T-cell (primary cell): ENCODE measurements at regions of chr6 and their contacts with region 1.

Region 1: GRCh38 chr6:148760568-148761526 is 14.0 kb downstream of the UST start:
- DNase-seq: peak in 32 of 35 experiments; percentile 24 to 75 (median 44)
- ATAC-seq: peak; percentile 64 to 71 (median 68)
- H3K4me3 ChIP-seq: peak overlapping the region; percentile 1 to 42
- H3K4me3 Mint-ChIP-seq: peak overlapping the region; percentile 74 to 83 (median 79)
- H3K27ac ChIP-seq: peak overlapping the region; percentile 95
- H3K27ac Mint-ChIP-seq: peak overlapping the region; percentile 91 to 94
- H3K4me1 ChIP-seq: peaks cover 24 to 34% of the 10 kb centered on the region in 2 experiments
- H3K4me1 Mint-ChIP-seq: peaks cover 51 to 83% (median 53%) of the 10 kb centered on the region in 3 donors
- H3K27me3 ChIP-seq: no peaks in the 10 kb centered on the region
- H3K27me3 Mint-ChIP-seq: no peaks in the 10 kb centered on the region

Region 2: DNA sequence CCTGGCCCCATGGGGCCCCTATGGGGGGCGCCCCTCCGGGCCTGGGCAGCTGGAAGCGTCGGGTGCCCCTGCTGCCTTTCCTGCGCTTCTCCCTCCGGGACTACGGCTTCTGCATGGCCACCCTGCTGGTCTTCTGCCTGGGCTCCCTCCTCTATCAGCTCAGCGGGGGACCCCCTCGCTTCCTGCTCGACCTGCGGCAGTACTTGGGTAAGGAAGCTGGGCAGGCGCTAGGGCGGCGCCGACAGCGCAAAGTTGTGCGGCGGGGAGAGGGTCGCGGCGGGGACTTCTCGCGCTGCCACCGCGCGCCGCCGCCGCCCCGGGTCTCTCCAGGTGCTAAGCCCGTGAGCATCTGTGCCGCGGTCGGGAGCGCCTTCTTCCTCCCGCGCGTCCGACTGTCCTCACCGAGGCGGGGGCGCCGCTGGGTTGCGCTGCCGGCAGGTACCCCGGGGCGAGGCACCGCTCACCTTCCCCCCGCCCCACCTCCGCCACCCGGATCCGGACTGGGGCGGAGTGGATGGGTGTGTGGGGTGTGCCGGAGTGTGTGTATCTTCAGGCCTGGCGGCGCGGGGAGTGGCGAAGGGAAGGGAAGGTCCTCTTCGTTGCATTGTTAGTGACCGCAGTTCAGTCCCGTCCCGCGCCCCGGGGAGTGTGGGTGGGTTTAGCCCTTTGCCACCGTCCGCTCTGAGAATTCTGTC is 13.2 kb before region 1 on chr6:
- CTCF ChIA-PET with region 1: interaction called in 1 of 2 experiments, 7 read pairs
- POLR2A ChIA-PET with region 1: interaction called, 3 to 12 read pairs
- DNase-seq: peak in 33 of 35 experiments; percentile 26 to 75 (median 50)
- ATAC-seq: peak; percentile 73 to 77 (median 75)
- H3K4me3 ChIP-seq: peak overlapping the region; percentile 83 to 88
- H3K4me3 Mint-ChIP-seq: peak overlapping the region; percentile 80 to 94 (median 80)
- H3K27ac ChIP-seq: peak overlapping the region; percentile 58
- H3K27ac Mint-ChIP-seq: no peak overlapping the region
- H3K4me1 ChIP-seq: peaks cover 0 to 18% of the 10 kb centered on the region in 2 experiments
- H3K4me1 Mint-ChIP-seq: peaks cover 21 to 37% (median 30%) of the 10 kb centered on the region in 3 donors
- H3K27me3 ChIP-seq: peaks cover 0 to 20% of the 10 kb centered on the region in 2 experiments
- H3K27me3 Mint-ChIP-seq: peaks cover 24 to 30% of the 10 kb centered on the region in 2 donors

Region 3: GRCh38 chr6:148800535-148800934 is 39.7 kb after region 1 on chr6:
- CTCF ChIA-PET with region 1: no interaction called
- POLR2A ChIA-PET with region 1: interaction called in 1 of 2 experiments, 11 read pairs
- DNase-seq: no peak
- ATAC-seq: no peak
- H3K4me3 ChIP-seq: no peak overlapping the region
- H3K4me3 Mint-ChIP-seq: no peak overlapping the region
- H3K27ac ChIP-seq: no peak overlapping the region
- H3K27ac Mint-ChIP-seq: no peak overlapping the region
- H3K4me1 ChIP-seq: peaks cover 0 to 8% of the 10 kb centered on the region in 2 experiments
- H3K4me1 Mint-ChIP-seq: peaks cover 0 to 20% (median 4%) of the 10 kb centered on the region in 3 donors
- H3K27me3 ChIP-seq: no peaks in the 10 kb centered on the region
- H3K27me3 Mint-ChIP-seq: peaks cover 0 to 1% of the 10 kb centered on the region in 2 donors

Region 4: GRCh38 chr6:149545754-149546528 is 785.1 kb after region 1 on chr6 and contains the start of gene PPIL4:
- CTCF ChIA-PET with region 1: no interaction called
- POLR2A ChIA-PET with region 1: interaction called in 1 of 2 experiments, 13 read pairs
- DNase-seq: peak; percentile 87 to 99 (median 95)
- ATAC-seq: peak; percentile 92 to 96 (median 94)
- H3K4me3 ChIP-seq: peak within 1 kb of the TSS; percentile 71 to 96
- H3K4me3 Mint-ChIP-seq: peak within 1 kb of the TSS; percentile 89 to 99 (median 98)
- H3K27ac ChIP-seq: peak within 1 kb of the TSS; percentile 97
- H3K27ac Mint-ChIP-seq: peak within 1 kb of the TSS; percentile 98
- H3K4me1 ChIP-seq: peaks cover 21 to 28% of the 10 kb centered on the region in 2 experiments
- H3K4me1 Mint-ChIP-seq: peaks cover 37 to 45% (median 44%) of the 10 kb centered on the region in 3 donors
- H3K27me3 ChIP-seq: no peaks in the 10 kb centered on the region
- H3K27me3 Mint-ChIP-seq: peaks cover 0 to 8% of the 10 kb centered on the region in 2 donors
- total RNA-seq, gene PPIL4: 25.2 to 32.1 (median 26.6) TPM